ENCODE measurements at regions of chr2 and their contacts with region 1.

Region 1: DNA sequence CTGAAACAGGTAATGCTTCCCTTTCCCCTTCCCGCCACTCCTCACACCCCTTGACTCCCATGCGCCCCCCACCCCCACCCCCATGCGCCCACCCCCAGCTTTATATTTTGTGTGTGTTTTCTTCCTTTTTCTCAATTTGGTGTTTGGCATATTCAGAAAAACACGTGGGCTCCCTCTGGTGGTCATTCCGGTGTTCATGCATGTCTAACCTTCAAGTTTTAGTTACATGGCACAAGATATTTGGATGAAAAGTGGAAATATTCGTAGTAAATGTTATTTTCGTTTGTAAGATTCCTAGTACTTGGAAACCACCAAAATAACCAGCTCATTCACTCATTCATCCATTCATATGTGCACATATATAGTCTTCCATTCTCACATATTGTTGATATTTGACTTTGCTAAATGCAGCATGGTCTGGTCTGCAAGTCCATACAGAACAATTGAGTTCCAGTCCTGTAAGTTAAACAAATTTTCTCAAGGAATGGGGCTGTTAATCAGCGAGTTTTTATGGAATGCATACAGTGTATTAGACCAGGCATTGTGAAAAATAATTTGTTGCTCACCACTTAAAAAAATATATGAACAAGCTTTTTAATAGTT is 143.6 kb upstream of the MAP3K20 start:
- DNase-seq: no peak
- H3K4me3 ChIP-seq: no peak overlapping the region
- CTCF ChIP-seq: peak; percentile 64

Region 2: DNA sequence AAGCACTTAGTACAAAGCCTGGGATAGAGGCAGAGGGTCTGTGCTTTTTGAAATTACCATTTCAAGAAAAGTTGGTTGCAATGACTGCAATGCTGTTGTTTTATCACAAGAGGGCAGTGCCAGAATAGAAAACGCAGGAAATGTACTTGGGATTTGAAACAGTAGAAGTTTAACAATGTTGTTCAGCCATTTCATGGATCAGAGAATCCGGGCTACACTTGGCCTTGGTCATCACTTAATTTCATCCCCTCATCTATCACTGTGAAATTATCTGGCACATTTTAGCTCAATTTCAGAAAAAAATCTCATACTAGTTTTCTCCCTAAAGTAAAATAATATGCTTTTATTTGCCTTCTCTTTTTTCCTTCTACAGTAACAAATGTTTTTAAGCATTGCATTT is 125.5 kb before region 1 on chr2:
- CTCF ChIA-PET with region 1: interaction called, 254 read pairs
- POLR2A ChIA-PET with region 1: no interaction called
- DNase-seq: no peak
- H3K4me3 ChIP-seq: no peak overlapping the region
- CTCF ChIP-seq: peak; percentile 64

Region 3: DNA sequence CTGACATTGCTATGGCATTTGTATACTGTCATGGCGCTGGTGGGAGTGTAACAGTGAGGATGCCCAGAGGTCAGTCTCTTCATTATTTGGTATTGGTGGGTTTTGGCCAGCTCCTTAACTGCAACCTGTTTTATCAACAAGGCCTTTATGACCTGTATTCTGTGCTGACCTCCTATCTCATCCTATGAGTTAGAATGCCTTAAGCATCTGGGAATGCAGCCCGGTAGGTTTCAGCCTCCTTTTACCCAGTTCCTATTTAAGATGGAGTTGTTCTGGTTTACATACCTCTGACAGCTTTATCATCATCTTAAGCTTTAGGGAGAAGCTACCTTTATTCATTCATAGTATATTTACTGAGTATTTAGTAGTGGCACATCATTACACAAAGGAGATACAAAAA is 92.6 kb before region 1 on chr2:
- CTCF ChIA-PET with region 1: interaction called, 13 read pairs
- POLR2A ChIA-PET with region 1: no interaction called
- DNase-seq: no peak
- H3K4me3 ChIP-seq: no peak overlapping the region
- CTCF ChIP-seq: no peak

Region 4: DNA sequence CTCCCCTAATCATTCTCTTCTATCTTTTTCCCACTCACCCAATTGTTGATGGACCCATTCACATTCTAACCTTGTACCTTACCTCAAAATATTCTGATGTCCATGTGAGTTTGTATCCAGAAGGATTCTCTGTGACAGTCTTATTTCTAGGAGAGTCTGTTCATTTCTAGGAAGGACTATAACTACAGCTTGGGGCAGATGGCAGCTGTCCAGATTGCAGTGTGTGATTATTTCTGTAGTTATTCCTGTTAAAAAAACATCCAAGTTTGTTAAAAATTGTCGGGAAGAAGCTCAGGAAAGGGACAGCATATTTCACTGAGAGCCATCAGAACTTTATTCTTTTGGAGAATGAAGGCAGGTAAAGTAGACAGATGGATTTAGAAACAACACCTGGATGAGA is 53.8 kb before region 1 on chr2:
- CTCF ChIA-PET with region 1: interaction called, 35 read pairs
- POLR2A ChIA-PET with region 1: no interaction called
- DNase-seq: no peak
- H3K4me3 ChIP-seq: no peak overlapping the region
- CTCF ChIP-seq: no peak

Region 5: GRCh38 chr2:172914341-172915004 is 17.5 kb before region 1 on chr2:
- CTCF ChIA-PET with region 1: interaction called, 37 read pairs
- POLR2A ChIA-PET with region 1: no interaction called
- DNase-seq: no peak
- H3K4me3 ChIP-seq: no peak overlapping the region
- CTCF ChIP-seq: no peak

Region 6: DNA sequence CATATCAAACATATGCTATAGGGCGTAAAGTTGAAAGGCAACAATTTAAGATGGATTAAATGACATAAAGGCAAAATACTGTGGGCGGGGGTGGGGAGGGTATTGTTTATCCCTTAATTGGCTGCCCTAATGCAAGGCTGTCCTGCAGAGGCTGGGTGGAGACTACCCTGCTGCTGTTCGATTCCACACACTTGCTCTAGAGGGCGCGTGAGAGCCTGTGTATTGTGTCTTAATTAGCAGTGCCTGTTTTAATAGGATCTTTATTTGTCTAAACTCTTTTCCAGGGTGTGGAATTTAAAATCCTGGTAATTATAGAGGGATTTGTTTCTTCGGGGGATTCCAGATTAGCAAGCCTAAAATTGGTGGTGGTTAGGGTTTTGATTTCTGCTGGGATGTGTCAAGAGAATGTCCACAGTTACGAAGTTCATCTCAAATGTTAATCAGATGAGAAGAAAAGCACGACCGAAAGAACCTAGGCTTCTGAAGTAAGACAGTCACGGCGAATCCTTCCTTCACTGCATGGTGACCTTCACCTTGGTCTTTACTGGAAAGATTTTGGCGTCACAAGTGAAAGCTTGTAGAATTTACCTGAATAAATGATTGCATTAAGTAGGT is 40.1 kb after region 1 on chr2:
- CTCF ChIA-PET with region 1: interaction called, 17 read pairs
- POLR2A ChIA-PET with region 1: no interaction called
- DNase-seq: no peak
- H3K4me3 ChIP-seq: no peak overlapping the region
- CTCF ChIP-seq: peak; percentile 85

Region 7: GRCh38 chr2:173226899-173227698 is 295.1 kb after region 1 on chr2:
- CTCF ChIA-PET with region 1: no interaction called
- POLR2A ChIA-PET with region 1: no interaction called
- DNase-seq: no peak
- H3K4me3 ChIP-seq: no peak overlapping the region
- CTCF ChIP-seq: no peak

Region 8: GRCh38 chr2:173288561-173288960 is 356.5 kb after region 1 on chr2:
- CTCF ChIA-PET with region 1: no interaction called
- POLR2A ChIA-PET with region 1: no interaction called
- DNase-seq: peak; percentile 23
- H3K4me3 ChIP-seq: no peak overlapping the region
- CTCF ChIP-seq: no peak